ENCODE measurements at regions of chr6 and their contacts with region 1.

Region 1: DNA sequence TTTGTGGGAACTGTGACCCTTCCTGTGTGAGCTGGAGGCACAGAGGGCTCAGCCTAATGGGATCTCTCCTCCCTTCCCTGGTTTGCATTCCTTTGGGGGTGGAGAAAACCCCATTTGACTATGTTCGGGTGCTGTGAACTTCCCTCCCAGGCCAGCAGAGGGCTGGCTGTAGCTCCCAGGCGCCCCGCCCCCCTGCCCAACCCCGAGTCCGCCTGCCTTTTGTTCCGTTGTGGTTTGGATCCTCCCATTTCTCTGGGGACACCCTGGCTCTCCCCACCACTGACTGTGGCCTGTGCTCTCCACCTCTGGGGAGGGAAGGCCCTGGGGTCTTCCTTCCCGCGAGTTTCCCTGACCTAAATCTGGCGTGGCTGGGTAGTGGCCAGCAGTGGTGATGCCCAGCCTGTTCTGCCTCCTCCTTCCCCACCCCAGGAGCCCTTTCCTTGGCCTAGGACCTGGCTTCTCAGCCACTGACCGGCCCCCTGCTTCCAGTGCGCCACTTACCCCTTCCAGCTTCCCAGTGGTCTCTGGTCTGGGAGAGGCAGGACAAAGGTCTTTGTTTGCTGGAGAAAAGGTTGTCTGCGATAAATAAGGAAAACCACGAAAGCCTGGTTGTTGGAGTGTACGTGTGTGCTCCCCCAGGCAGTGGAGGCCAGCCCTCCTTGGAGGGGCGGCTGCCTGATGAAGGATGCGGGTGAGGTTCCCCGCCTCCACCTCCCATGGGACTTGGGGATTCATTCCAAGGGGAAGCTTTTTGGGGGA is 4.9 kb downstream of the VEGFA start:
- DNase-seq: peak; percentile 73
- H3K4me3 Mint-ChIP-seq: peak overlapping the region; percentile 98
- H3K27ac Mint-ChIP-seq: peak overlapping the region; percentile 83
- H3K4me1 Mint-ChIP-seq: peaks cover 43% of the 10 kb centered on the region
- H3K27me3 Mint-ChIP-seq: no peaks in the 10 kb centered on the region
- CTCF ChIP-seq: peak; percentile 79

Region 2: DNA sequence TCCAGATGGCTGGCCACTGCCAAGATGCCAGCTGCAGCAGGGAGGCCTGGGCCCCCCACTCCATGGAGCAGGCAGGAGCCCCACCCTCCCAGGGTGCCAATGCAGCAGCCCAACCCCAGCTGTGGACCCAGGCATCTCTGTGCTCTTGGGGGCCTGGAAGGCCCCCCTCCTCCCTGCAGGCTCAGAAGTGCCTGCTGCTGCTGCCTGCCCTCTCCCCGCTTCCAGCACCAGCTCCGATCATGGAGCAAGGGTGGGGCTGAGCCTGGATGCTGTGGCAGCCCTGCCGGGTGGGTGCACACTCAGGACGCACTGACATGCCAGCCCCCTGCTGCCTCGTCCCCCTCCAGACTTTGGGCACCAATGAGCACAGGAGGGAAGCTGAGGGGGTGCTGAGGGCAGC is 362.4 kb before region 1 on chr6:
- CTCF ChIA-PET with region 1: no interaction called
- POLR2A ChIA-PET with region 1: no interaction called
- intact Hi-C with region 1: no loop called
- DNase-seq: no peak
- H3K4me3 Mint-ChIP-seq: no peak overlapping the region
- H3K27ac Mint-ChIP-seq: no peak overlapping the region
- H3K4me1 Mint-ChIP-seq: no peaks in the 10 kb centered on the region
- H3K27me3 Mint-ChIP-seq: no peaks in the 10 kb centered on the region
- CTCF ChIP-seq: no peak

Region 3: DNA sequence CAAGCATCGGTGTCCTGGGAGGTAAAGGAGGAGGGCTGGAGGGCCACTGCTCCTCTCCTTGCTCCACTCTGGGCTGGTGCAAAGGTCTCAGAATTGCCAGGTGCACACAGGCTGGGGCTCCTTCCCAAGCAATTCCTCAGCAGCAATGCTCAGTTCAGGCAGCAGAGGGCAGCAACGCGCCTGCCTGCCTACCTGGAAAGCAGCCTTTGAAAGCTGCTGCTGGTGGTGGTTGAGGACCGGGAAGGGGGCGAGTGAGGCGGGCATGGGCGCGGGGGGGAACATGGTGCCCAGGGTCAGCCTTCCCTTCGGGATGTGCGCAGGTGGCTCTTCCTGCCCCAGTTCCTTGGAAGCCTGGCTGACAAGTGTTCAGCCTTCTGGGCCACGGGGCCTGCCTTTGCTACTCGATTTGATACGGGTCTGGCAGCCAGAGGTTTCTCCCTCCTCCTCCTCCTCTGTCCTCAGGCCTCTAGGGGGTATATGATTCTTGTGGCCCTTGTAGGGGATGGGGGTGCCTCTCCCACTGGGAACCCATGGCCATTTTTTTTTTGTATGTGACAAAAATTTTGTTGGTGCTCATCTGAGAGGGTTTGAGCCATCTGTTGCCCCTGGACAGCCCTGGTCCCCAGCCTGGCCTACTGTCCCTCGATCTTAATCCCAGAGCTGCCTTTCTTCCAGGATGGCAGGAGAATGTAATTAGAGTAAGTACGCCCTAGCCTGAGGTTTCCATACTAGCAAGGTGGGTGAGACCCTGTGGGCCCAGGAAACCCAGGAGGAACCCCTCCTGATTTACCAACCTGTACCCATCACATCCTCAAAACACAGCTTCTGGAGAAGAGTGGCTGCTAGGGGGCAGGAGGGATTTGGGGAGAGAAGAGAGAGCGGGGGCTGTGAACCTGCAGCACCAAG is 107.5 kb before region 1 on chr6:
- CTCF ChIA-PET with region 1: interaction called, 30 read pairs
- POLR2A ChIA-PET with region 1: interaction called, 17 read pairs
- intact Hi-C with region 1: loop called (anchors 2 kb)
- DNase-seq: peak; percentile 81
- H3K4me3 Mint-ChIP-seq: peak overlapping the region; percentile 3
- H3K27ac Mint-ChIP-seq: peak overlapping the region; percentile 71
- H3K4me1 Mint-ChIP-seq: peaks cover 30% of the 10 kb centered on the region
- H3K27me3 Mint-ChIP-seq: no peaks in the 10 kb centered on the region
- CTCF ChIP-seq: peak; percentile 87

Region 4: DNA sequence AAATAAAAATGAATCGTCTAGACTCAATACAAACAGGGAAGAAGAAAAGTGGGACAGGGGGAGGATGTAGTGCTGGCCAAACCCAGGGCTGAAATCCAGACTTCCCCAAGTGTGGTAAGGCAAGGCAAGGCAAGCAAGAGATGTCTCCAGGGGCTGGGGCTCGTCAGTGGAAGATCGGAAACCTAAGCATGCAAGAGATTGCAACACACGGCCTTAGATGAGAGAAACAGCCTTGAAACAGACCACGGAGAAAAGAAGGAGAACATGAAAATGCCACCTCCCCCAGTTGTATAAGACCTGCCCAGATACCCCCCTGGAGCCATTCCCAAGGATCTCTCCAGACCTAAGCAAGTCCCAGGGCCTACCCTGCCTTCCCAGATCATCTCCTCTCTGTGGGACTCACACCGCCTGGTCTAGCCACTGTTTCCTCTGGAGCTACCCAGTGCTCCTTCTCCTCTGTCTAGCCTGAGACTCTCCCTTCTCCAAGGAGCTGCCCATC is 15.1 kb after region 1 on chr6:
- CTCF ChIA-PET with region 1: interaction called, 65 read pairs
- POLR2A ChIA-PET with region 1: interaction called, 5 read pairs
- intact Hi-C with region 1: no loop called
- DNase-seq: no peak
- H3K4me3 Mint-ChIP-seq: no peak overlapping the region
- H3K27ac Mint-ChIP-seq: no peak overlapping the region
- H3K4me1 Mint-ChIP-seq: no peaks in the 10 kb centered on the region
- H3K27me3 Mint-ChIP-seq: no peaks in the 10 kb centered on the region
- CTCF ChIP-seq: no peak

Region 5: GRCh38 chr6:43807228-43808061 is 32.5 kb after region 1 on chr6:
- CTCF ChIA-PET with region 1: interaction called, 12 read pairs
- POLR2A ChIA-PET with region 1: interaction called, 4 read pairs
- intact Hi-C with region 1: no loop called
- DNase-seq: no peak
- H3K4me3 Mint-ChIP-seq: no peak overlapping the region
- H3K27ac Mint-ChIP-seq: no peak overlapping the region
- H3K4me1 Mint-ChIP-seq: peaks cover 43% of the 10 kb centered on the region
- H3K27me3 Mint-ChIP-seq: no peaks in the 10 kb centered on the region
- CTCF ChIP-seq: no peak

Region 6: DNA sequence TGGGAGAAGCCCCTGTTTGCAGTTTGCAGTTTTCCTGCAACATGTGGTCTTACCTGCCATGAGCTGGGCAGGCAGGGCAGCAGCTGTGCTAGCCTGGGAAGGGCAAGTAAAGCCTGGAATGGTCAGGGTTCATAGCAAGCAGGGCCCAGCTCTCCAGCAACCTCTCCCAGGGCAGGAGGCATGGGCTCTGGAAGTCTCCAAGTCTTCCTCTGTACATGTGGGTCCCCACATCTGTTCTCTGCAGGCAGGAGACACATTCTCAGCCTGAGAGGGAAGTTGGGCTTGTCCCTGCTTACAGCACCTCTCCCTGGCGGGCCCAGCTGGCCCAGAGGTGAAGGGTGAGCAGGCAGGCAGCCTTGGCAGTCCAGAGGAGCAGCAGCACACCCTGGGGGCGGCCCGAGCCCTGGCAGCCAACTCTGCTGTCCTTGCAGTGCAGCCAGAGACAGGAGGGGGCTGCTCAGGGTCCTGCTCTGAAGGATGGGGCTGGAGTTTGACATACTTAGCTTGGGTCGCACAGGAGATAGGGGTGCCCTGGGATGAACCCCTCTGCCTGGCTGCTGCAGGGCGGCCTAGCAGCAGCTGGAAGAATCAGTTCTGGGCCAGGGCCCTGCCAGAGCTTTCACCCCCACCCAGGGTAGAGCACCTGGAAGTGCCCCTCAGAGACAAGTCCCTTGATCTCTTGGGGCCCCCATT is 176.3 kb after region 1 on chr6:
- CTCF ChIA-PET with region 1: no interaction called
- POLR2A ChIA-PET with region 1: interaction called, 3 read pairs
- intact Hi-C with region 1: loop called (anchors 1 kb)
- DNase-seq: peak; percentile 38
- H3K4me3 Mint-ChIP-seq: no peak overlapping the region
- H3K27ac Mint-ChIP-seq: no peak overlapping the region
- H3K4me1 Mint-ChIP-seq: peaks cover 5% of the 10 kb centered on the region
- H3K27me3 Mint-ChIP-seq: no peaks in the 10 kb centered on the region
- CTCF ChIP-seq: peak; percentile 37

Region 7: DNA sequence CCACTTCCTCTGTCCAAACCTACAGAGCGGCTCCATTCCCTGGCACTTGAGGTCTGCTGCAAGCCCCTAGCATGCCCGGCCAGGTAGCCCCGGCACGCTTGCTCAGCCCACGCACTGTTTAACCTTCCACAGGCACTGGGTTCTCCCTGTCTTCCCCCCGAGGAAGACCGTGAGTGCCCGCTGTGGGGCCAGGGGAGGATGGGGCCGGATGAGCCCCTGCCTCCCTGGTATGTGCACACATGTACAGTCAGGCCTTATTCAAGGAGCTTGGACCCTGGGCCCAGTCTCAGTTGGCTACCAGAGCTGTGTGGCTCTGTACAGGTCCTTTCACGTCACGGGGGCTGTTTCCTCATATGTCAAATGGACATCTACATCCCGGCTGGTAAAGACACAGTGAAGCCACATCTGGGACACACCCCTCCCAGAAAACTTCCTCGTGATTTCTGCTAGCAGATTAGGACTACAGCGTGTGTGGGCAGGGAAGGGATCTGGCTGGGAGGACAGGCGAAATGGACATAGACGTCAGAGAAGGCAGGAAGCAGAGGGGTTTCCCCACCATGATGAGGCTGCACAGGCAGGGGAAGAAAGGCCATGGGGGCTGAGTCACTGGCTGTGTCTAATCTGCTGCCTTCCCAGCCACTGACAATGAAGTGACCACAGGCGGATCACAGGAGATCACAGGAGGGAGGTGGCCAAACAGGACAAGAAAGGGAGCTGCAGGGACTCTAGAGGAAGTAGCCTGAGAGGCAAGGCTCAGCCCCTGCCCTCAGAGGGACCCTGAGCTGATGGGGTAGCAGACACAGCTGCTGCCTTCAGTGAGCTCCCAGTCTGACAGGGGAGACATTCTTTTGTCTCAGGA is 289.4 kb after region 1 on chr6:
- CTCF ChIA-PET with region 1: interaction called, 14 read pairs
- POLR2A ChIA-PET with region 1: interaction called, 20 read pairs
- intact Hi-C with region 1: no loop called
- DNase-seq: peak; percentile 91
- H3K4me3 Mint-ChIP-seq: no peak overlapping the region
- H3K27ac Mint-ChIP-seq: peak overlapping the region; percentile 57
- H3K4me1 Mint-ChIP-seq: peaks cover 42% of the 10 kb centered on the region
- H3K27me3 Mint-ChIP-seq: no peaks in the 10 kb centered on the region
- CTCF ChIP-seq: no peak

Measured in MCF 10A (cell line).